Naive thymus-derived CD4-positive, alpha-beta T cell (primary cell): ENCODE measurements at regions of chr6 and their contacts with region 1.

Region 1: GRCh38 chr6:152296648-152297376 is 340.4 kb downstream of the SYNE1 start:
- DNase-seq: no peak
- ATAC-seq: no peak
- H3K4me3 ChIP-seq: no peak overlapping the region
- H3K4me3 Mint-ChIP-seq: no peak overlapping the region
- H3K27ac ChIP-seq: no peak overlapping the region
- H3K27ac Mint-ChIP-seq: peak overlapping the region in 4 of 9 donors; percentile 38 to 70 (median 44)
- H3K4me1 ChIP-seq: peaks cover 12 to 14% of the 10 kb centered on the region in 2 donors
- H3K4me1 Mint-ChIP-seq: peaks cover 26 to 60% (median 48%) of the 10 kb centered on the region in 7 donors
- H3K27me3 ChIP-seq: no peaks in the 10 kb centered on the region
- H3K27me3 Mint-ChIP-seq: no peaks in the 10 kb centered on the region

Region 2: GRCh38 chr6:152309648-152310047 is 12.8 kb after region 1 on chr6:
- CTCF ChIA-PET with region 1: interaction called, 7 read pairs
- POLR2A ChIA-PET with region 1: interaction called, 13 read pairs
- intact Hi-C with region 1: loop called (anchors 1 kb)
- DNase-seq: peak; percentile 27 to 81 (median 73)
- ATAC-seq: peak; percentile 94
- H3K4me3 ChIP-seq: no peak overlapping the region
- H3K4me3 Mint-ChIP-seq: peak overlapping the region in 5 of 10 donors; percentile 17 to 59 (median 38)
- H3K27ac ChIP-seq: no peak overlapping the region
- H3K27ac Mint-ChIP-seq: peak overlapping the region in 3 of 9 donors; percentile 36 to 65 (median 39)
- H3K4me1 ChIP-seq: peaks cover 6 to 21% of the 10 kb centered on the region in 2 donors
- H3K4me1 Mint-ChIP-seq: peaks cover 7 to 35% (median 33%) of the 10 kb centered on the region in 7 donors
- H3K27me3 ChIP-seq: no peaks in the 10 kb centered on the region
- H3K27me3 Mint-ChIP-seq: peaks cover 0 to 10% (median 0%) of the 10 kb centered on the region in 5 donors

Region 3: GRCh38 chr6:153401754-153402153 is 1104.9 kb after region 1 on chr6:
- CTCF ChIA-PET with region 1: no interaction called
- POLR2A ChIA-PET with region 1: no interaction called
- intact Hi-C with region 1: no loop called
- DNase-seq: no peak
- ATAC-seq: no peak
- H3K4me3 ChIP-seq: no peak overlapping the region
- H3K4me3 Mint-ChIP-seq: no peak overlapping the region
- H3K27ac ChIP-seq: no peak overlapping the region
- H3K27ac Mint-ChIP-seq: no peak overlapping the region
- H3K4me1 ChIP-seq: no peaks in the 10 kb centered on the region
- H3K4me1 Mint-ChIP-seq: no peaks in the 10 kb centered on the region
- H3K27me3 ChIP-seq: no peaks in the 10 kb centered on the region
- H3K27me3 Mint-ChIP-seq: peaks cover 0 to 2% (median 0%) of the 10 kb centered on the region in 5 donors